BJ (cell line): ENCODE measurements at regions of chr2 and their contacts with region 1.

Region 1: GRCh38 chr2:94986392-94986963 is 39.0 kb upstream of the MAL start:
- DNase-seq: peak; percentile 4
- H3K4me3 ChIP-seq: no peak overlapping the region
- H3K27me3 ChIP-seq: peaks cover 4% of the 10 kb centered on the region
- CTCF ChIP-seq: peak; percentile 82

Region 2: GRCh38 chr2:94996305-94997100 is 10.0 kb after region 1 on chr2:
- CTCF ChIA-PET with region 1: interaction called, 11 read pairs
- POLR2A ChIA-PET with region 1: no interaction called
- DNase-seq: no peak
- H3K4me3 ChIP-seq: no peak overlapping the region
- H3K27me3 ChIP-seq: peaks cover 13% of the 10 kb centered on the region
- CTCF ChIP-seq: no peak